Heart left ventricle (tissue), 16 donors: ENCODE measurements at regions of chr2 and their contacts with region 1.

Region 1: GRCh38 chr2:191318729-191319078 is 73.5 kb downstream of the MYO1B start:
- DNase-seq: no peak
- ATAC-seq: peak in 3 of 4 donors; percentile 21 to 35 (median 31)
- H3K4me3 ChIP-seq: no peak overlapping the region
- H3K27ac ChIP-seq: peak overlapping the region in 7 of 12 donors; percentile 5 to 37 (median 18)
- H3K4me1 ChIP-seq: peaks cover 0 to 61% (median 45%) of the 10 kb centered on the region in 12 donors
- H3K27me3 ChIP-seq: no peaks in the 10 kb centered on the region
- CTCF ChIP-seq: no peak
- POLR2A ChIP-seq: no peak

Region 2: DNA sequence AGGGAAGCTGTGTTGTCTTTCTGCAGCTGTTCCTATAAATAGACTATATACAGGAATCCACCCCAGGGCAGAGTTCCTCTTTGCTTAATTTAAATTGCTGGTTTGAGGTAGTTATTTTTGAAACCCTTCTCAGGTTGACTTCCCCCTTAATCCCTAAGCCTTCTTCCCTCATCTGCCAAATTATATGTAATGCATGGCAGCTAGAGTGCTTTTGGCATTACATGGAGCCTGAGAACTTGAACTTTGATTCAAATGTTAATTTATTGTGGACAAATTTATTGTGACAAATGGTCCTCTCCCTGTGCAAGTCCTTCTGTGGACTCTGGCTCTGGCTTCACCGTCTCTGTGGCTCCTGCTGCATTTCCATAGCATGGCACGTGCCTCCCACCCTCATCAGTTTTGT is 44.3 kb before region 1 on chr2:
- intact Hi-C with region 1: loop called in 1 of 10 experiments (anchors 5 kb)
- DNase-seq: no peak
- ATAC-seq: no peak
- H3K4me3 ChIP-seq: no peak overlapping the region
- H3K27ac ChIP-seq: no peak overlapping the region
- H3K4me1 ChIP-seq: peaks cover 0 to 49% (median 25%) of the 10 kb centered on the region in 12 donors
- H3K27me3 ChIP-seq: no peaks in the 10 kb centered on the region
- CTCF ChIP-seq: no peak
- POLR2A ChIP-seq: no peak